ENCODE measurements at regions of chr18 and their contacts with region 1.

Region 1: GRCh38 chr18:79679111-79679872 is at the start of gene CTDP1:
- DNase-seq: peak; percentile 97
- H3K4me3 Mint-ChIP-seq: peak within 1 kb of the TSS; percentile 94
- H3K27ac Mint-ChIP-seq: peak within 1 kb of the TSS; percentile 99
- H3K4me1 Mint-ChIP-seq: peaks cover 59% of the 10 kb centered on the region
- H3K27me3 Mint-ChIP-seq: no peaks in the 10 kb centered on the region
- total RNA-seq, gene CTDP1: 45.9 and 47.2 TPM in 2 replicates

Region 2: DNA sequence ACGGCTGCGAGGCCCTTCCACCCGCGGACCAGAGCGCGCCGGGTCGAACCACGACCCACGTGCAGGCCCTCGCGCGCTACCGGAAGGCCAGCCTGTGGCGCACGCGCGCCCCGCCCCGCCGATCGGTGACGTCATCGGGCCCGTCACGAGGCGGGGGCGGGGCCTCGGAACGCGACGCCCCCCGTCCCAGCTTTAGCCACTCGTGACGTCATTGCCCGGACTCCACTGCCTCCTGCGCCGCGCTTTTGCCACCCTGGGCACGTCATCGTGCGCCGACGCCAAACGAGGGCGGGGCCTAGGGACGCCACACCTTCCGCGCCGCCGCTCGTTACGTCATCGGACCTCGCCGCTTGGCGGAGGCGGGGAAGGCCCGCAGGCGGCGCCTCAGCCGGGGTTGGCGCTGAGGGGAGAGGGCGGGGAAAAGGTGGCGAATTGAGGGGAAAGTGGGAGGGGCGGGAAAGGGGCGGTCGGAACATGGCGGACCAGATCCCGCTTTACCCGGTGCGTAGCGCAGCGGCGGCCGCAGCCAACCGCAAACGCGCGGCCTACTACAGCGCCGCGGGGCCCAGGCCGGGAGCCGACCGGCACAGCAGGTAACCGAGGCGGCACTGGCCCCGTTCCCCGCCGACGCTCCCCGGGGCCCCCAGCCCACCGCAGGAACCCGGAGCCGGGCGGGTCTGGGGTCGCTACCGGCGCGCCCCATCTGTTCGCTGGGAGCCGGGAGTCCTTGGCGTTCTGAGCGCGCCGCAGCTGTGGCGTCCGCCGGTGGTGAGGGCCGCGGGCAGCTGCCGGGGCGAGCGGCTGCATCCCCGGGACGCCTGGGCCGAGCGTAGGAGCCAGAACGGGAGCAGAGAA is 610.1 kb before region 1 on chr18 and contains the start of gene ATP9B:
- intact Hi-C with region 1: loop called (anchors 1 kb)
- DNase-seq: peak; percentile 99
- H3K4me3 Mint-ChIP-seq: peak within 1 kb of the TSS; percentile 89
- H3K27ac Mint-ChIP-seq: peak within 1 kb of the TSS; percentile 98
- H3K4me1 Mint-ChIP-seq: peaks cover 38% of the 10 kb centered on the region
- H3K27me3 Mint-ChIP-seq: peaks cover 9% of the 10 kb centered on the region
- total RNA-seq, gene ATP9B: 26.1 and 31.4 TPM in 2 replicates

Region 3: DNA sequence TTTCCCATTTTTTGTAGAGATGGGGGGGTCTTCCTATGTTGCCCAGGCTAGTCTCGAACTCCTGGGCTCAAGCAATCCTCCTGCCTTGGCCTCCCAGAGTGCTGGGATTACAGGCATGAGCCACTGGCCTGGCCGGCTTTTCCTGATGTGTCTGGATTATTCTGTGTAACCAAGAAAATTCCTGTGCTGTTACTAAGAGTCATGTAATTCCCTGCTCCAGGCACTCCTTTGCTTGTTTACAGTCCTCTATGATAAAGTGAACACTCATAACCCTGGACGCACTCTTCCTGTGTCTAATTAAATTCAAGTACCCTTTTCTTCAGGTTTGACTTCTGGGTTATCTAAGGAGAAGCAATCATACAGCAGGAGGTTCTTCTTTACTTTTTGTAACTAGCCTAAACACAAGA is 14.6 kb before region 1 on chr18:
- intact Hi-C with region 1: no loop called
- DNase-seq: no peak
- H3K4me3 Mint-ChIP-seq: no peak overlapping the region
- H3K27ac Mint-ChIP-seq: no peak overlapping the region
- H3K4me1 Mint-ChIP-seq: no peaks in the 10 kb centered on the region
- H3K27me3 Mint-ChIP-seq: peaks cover 20% of the 10 kb centered on the region

Region 4: DNA sequence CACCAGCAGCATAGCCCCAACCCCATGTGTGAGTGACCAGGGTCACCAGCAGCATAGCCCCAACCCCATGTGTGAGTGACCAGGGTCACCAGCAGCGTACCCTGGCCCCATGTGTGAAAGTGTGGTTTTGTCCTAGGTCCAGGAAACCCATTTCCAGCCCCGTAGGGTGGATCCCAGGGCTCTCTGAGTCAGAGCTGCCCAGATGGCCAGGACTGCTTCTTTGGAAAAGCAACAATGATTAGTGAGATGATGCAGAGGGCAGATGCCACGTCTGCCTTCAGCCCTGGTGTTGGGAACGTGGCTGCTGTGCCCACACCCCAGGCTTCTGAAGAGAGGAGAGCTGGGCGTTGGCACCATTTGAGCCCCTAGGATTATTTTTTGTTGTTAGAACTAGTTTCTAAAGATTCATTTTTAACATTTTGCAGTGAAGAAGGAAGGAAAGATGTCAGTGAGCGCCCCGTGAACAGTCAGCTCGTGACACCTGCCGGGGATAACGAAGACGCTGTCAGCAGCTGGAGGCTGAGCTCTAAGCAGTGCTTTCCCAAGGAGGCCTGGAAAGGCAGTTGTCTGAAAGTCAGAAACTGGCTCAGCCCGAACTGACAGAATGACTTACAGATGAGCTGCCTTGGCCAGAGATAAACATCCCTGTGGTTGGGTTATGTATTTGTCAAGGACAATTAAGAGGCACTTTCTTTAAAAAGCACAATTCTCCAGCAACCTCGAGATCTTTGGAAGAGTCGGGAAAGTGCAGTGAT is 86.4 kb after region 1 on chr18:
- intact Hi-C with region 1: no loop called
- DNase-seq: no peak
- H3K4me3 Mint-ChIP-seq: no peak overlapping the region
- H3K27ac Mint-ChIP-seq: no peak overlapping the region
- H3K4me1 Mint-ChIP-seq: peaks cover 5% of the 10 kb centered on the region
- H3K27me3 Mint-ChIP-seq: peaks cover 5% of the 10 kb centered on the region

Region 5: GRCh38 chr18:79941473-79942119 is 262.3 kb after region 1 on chr18:
- intact Hi-C with region 1: no loop called
- DNase-seq: no peak
- H3K4me3 Mint-ChIP-seq: no peak overlapping the region
- H3K27ac Mint-ChIP-seq: no peak overlapping the region
- H3K4me1 Mint-ChIP-seq: peaks cover 16% of the 10 kb centered on the region
- H3K27me3 Mint-ChIP-seq: no peaks in the 10 kb centered on the region

Region 6: GRCh38 chr18:79951578-79952455 is 272.5 kb after region 1 on chr18 and contains the start of gene SLC66A2:
- intact Hi-C with region 1: loop called (anchors 1 kb)
- DNase-seq: peak; percentile 89
- H3K4me3 Mint-ChIP-seq: peak within 1 kb of the TSS; percentile 89
- H3K27ac Mint-ChIP-seq: peak within 1 kb of the TSS; percentile 82
- H3K4me1 Mint-ChIP-seq: peaks cover 37% of the 10 kb centered on the region
- H3K27me3 Mint-ChIP-seq: no peaks in the 10 kb centered on the region
- total RNA-seq, gene SLC66A2: 49.2 and 54.6 TPM in 2 replicates

Region 7: GRCh38 chr18:79988451-79989194 is 309.3 kb after region 1 on chr18 and contains the start of gene TXNL4A:
- intact Hi-C with region 1: loop called (anchors 1 kb)
- DNase-seq: peak; percentile 85
- H3K4me3 Mint-ChIP-seq: peak within 1 kb of the TSS; percentile 96
- H3K27ac Mint-ChIP-seq: peak within 1 kb of the TSS; percentile 97
- H3K4me1 Mint-ChIP-seq: peaks cover 32% of the 10 kb centered on the region
- H3K27me3 Mint-ChIP-seq: peaks cover 5% of the 10 kb centered on the region
- total RNA-seq, gene TXNL4A: 190 and 198 TPM in 2 replicates

Region 8: DNA sequence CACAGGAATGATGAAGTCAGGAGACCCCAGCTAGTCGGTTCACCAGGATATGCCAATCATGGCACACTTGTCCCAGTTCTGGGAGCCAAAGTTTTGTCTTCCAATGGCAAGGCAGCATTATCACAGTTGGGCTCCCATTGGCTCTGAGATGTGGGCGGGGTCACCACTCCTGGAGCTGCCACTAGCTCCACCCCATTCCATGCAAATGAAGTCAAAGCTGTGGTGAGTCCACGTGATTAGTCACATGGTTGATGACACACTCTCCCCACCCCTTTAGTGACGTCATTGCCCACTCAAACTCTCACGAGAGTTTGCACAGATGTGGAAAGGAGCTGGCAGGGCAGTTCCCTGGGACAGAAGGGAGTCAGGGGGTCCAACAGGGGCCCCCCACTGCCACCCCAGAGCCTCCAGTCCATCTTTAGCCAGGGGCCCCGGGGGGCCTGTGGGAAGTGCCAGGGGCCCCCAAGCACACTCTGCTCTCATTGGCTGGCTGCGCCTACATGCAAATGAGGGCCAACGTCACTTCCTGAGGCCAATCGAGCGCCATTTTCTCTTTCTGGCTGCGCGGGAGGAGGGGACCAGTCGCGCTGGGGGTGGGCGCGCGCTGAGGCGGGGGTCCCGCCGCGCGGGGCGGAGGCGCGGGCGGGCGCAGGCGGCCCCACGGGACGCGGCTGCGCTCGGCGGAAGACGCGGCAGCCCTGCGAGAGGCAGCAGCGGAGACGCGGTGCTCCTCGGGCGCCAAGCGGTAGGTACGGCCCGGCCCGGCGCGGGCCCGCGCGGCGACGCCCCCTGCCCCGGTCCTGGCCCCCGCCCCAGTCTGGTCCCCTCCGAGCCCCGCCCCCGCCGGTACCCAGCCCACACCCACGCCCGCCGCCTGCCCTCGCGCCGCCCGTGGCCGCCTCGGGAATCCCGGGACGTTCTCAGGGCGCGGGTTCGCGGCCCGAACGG is 429.7 kb after region 1 on chr18 and contains the start of gene ADNP2:
- intact Hi-C with region 1: loop called (anchors 1 kb)
- DNase-seq: peak; percentile 81
- H3K4me3 Mint-ChIP-seq: peak within 1 kb of the TSS; percentile 86
- H3K27ac Mint-ChIP-seq: peak within 1 kb of the TSS; percentile 86
- H3K4me1 Mint-ChIP-seq: peaks cover 24% of the 10 kb centered on the region
- H3K27me3 Mint-ChIP-seq: peaks cover 6% of the 10 kb centered on the region
- total RNA-seq, gene ADNP2: 29.0 TPM in 2 replicates

Measured in activated T-helper 1 cell treated with anti-CD3 and anti-CD28 coated beads, Interleukin-12 subunit alpha, Interleukin-12 subunit beta, Interleukin-2, Interleukin-4 antibody, amounts not matched to agents 30 ng/mL and 10 ng/mL and 1 ng/mL, durations not matched to agents 14 hours and 24 hours and 36 hours (primary cell).